ENCODE measurements at regions of chr3 and their contacts with region 1.

Region 1: GRCh38 chr3:98602078-98602678 is 8.8 kb upstream of the CPOX start:
- DNase-seq: peak; percentile 51
- CTCF ChIP-seq: peak; percentile 78

Region 2: GRCh38 chr3:98710033-98710659 is 108.0 kb after region 1 on chr3:
- in situ Hi-C with region 1: no loop called
- DNase-seq: no peak
- CTCF ChIP-seq: no peak

Region 3: DNA sequence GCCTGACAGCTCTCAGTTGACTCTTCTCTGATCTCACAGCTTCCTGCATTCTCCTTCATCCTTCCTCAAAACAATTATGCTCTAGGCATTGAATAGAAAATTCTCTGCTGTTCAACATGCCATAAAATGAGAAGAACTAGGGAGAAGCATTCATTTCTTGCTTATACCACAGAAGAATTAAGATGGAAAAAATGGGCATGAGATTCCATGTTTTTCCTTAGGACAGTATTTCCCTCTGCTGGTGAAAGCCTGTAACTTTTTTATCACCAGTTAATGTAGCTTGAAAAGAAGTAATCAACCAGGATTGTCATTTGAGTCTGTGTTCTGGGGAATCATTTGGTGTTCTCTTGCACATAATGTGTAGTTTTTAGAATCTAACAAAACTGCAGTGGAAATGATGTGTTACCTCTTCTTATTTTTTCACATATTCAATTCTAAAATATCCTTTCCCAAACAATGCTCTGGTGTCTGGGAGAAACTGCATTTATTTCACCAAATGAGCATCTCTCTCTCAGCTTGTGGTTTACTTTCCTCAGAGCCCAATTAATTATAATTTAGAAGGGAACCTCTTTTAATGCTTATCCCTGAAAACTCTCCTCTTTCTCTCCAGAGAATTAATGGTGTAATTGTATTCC is 392.1 kb after region 1 on chr3:
- in situ Hi-C with region 1: loop called (anchors 25 kb)
- DNase-seq: no peak
- CTCF ChIP-seq: peak; percentile 23